ENCODE measurements at regions of chr11 and their contacts with region 1.

Region 1: GRCh38 chr11:18768472-18768901 is 23.1 kb downstream of the PTPN5 start:
- DNase-seq: no peak
- H3K4me3 ChIP-seq: no peak overlapping the region
- H3K4me3 Mint-ChIP-seq: no peak overlapping the region
- H3K27ac Mint-ChIP-seq: no peak overlapping the region
- H3K4me1 ChIP-seq: peaks cover 6% of the 10 kb centered on the region
- H3K4me1 Mint-ChIP-seq: no peaks in the 10 kb centered on the region
- H3K27me3 ChIP-seq: no peaks in the 10 kb centered on the region
- H3K27me3 Mint-ChIP-seq: peaks cover 4% of the 10 kb centered on the region
- CTCF ChIP-seq: no peak

Region 2: DNA sequence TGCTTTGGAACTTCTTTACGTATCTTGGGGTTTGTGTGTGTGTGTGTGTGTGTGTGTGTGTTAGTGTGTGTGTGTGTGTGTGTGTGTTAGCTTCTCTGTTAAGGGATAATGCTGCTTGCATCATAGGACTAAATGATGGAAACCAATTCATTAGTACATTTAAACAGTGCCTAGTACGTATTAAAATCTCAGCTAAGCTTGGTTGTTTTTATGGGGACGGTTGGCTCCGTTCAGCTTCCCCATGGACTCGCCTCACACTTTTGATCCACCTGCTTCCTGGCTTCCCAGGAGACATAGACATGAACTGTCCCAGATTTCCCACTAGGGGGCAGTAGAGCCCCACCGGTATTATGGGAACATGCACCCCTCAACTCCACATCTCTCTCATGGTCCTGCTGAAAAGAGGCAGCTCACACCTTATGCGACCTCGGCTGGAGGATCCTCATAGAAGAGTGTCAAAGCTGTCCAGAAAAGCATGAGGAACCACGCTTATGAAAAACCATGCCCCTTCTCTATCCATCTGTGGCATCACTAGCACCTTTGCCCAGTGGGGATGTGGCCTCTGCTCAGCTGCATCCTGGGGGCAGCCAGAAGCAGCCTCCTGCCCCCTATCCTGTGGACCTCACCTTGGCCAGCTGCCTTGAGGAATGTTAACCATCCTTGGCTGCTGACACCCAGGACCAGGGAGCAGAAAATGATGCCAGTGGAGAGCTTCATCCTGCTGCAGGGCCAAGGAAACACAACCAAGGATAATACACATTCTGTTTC is 652.9 kb before region 1 on chr11:
- CTCF ChIA-PET with region 1: interaction called, 6 read pairs
- POLR2A ChIA-PET with region 1: no interaction called
- intact Hi-C with region 1: loop called (anchors 1 kb)
- DNase-seq: peak; percentile 77 to 80
- H3K4me3 ChIP-seq: no peak overlapping the region
- H3K4me3 Mint-ChIP-seq: no peak overlapping the region
- H3K27ac Mint-ChIP-seq: no peak overlapping the region
- H3K4me1 ChIP-seq: no peaks in the 10 kb centered on the region
- H3K4me1 Mint-ChIP-seq: no peaks in the 10 kb centered on the region
- H3K27me3 ChIP-seq: no peaks in the 10 kb centered on the region
- H3K27me3 Mint-ChIP-seq: peaks cover 17% of the 10 kb centered on the region
- CTCF ChIP-seq: peak; percentile 88 to 93

Region 3: DNA sequence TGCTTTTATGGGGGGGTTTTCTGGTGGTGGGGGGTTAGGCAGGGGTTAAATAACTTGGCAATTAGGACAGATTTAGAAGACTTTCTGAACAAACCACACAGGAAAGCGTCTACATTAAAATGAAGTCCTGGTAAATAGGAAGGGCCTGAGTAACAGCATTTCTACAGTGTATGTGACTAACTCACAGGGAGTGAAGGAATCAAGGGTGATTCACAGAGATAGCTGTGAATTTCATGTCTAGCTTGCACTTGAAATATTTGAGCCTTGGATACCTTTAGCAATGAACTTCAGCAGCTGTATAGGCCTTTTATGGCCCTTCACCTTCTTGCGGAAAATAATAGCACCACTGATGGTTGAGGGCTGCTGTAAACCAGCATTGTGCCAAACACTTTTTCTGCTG is 400.3 kb before region 1 on chr11:
- CTCF ChIA-PET with region 1: no interaction called
- POLR2A ChIA-PET with region 1: no interaction called
- intact Hi-C with region 1: no loop called
- DNase-seq: no peak
- H3K4me3 ChIP-seq: no peak overlapping the region
- H3K4me3 Mint-ChIP-seq: no peak overlapping the region
- H3K27ac Mint-ChIP-seq: no peak overlapping the region
- H3K4me1 ChIP-seq: peaks cover 11% of the 10 kb centered on the region
- H3K4me1 Mint-ChIP-seq: no peaks in the 10 kb centered on the region
- H3K27me3 ChIP-seq: no peaks in the 10 kb centered on the region
- H3K27me3 Mint-ChIP-seq: no peaks in the 10 kb centered on the region
- CTCF ChIP-seq: no peak

Region 4: DNA sequence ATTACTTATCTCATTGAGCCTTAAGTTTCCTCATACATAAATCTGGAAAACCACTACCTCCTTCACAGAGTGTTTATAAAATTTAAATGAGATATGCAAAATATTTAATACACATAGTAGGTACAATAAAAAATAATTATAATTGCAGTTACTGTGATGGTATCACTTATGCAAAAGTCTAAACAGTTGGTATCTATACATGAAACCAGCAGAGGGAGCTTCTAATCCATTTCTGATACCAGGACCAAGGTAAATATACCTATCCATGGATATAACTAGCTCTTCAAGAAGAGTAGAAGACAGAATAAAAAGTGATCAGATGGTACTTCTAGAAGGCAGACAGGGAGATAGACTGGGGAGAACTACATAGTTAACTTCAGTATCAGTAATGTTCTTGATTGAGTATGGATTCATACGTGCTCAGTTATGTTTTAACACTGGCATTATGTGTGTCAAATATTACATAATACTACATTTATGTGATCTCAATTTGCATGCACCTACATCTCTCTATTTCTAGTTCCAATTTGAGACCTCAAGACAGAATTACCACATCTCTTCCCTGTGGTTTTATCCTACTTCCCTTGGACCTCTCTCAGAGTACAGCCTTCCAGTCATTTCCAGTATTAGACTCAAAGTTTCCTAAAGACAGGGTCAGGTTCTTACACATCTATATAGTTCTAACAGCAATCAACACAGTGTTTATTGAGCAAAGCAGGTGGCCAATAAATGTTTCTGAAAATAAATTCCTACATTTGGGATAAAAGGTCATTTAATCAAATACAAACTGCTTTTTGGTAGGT is 228.1 kb before region 1 on chr11:
- CTCF ChIA-PET with region 1: interaction called, 13 read pairs
- POLR2A ChIA-PET with region 1: no interaction called
- intact Hi-C with region 1: loop called (anchors 1 kb)
- DNase-seq: peak in 1 of 2 experiments; percentile 37
- H3K4me3 ChIP-seq: no peak overlapping the region
- H3K4me3 Mint-ChIP-seq: no peak overlapping the region
- H3K27ac Mint-ChIP-seq: no peak overlapping the region
- H3K4me1 ChIP-seq: 0 out of 2 replicates have a peak, but pooled peaks cover 6% of the 10 kb centered on the region
- H3K4me1 Mint-ChIP-seq: no peaks in the 10 kb centered on the region
- H3K27me3 ChIP-seq: no peaks in the 10 kb centered on the region
- H3K27me3 Mint-ChIP-seq: no peaks in the 10 kb centered on the region
- CTCF ChIP-seq: peak; percentile 58 to 65

Region 5: DNA sequence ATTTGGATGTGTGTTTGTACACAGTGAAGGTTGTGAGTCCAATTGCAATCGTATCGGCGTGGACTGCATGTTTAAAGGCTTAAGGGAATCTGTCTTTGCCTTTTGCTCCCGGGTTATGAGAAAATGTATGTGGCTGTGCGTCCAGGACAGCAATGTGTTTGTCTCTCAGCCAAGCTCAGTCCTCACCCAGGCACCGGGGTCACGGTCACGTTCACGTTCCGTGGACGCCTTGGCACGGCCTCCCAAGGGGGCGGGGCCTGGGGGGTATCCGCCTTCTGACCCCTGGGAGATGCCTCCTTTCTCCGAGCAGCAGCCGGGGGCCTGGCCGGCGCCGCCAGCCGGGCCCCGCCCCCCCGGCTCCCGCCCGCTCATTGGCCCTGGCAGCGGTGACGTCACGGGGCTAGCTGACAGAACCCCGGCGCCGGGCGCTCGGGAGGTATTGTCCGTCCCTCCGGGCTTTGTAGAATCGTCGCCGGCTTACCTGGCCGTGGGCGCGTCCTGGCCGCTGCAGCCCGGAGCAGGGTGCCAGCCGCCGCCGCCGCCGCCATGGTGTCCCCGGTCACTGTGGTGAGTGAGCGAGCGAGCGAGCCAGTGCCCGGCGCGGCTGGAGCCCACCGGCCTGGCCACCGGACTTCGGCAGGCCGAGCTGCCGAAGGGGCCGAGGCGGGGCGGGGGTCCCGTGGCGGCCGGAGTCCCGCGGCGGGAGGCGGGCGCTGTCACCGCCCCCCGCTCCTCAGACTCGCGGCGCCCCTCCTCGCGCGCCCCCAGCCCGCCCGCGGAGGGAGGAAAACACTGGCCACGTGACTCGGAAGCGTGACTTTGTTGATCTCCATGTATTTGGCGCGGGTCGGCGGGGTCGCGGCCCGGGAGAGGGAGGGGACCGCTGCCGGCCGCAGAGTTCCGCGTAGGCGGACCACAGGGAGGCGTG is 69.9 kb before region 1 on chr11 and contains the start of gene TMEM86A:
- CTCF ChIA-PET with region 1: no interaction called
- POLR2A ChIA-PET with region 1: no interaction called
- intact Hi-C with region 1: loop called (anchors 2 kb)
- DNase-seq: peak; percentile 88 to 94
- H3K4me3 ChIP-seq: peak within 1 kb of the TSS; percentile 60
- H3K4me3 Mint-ChIP-seq: peak within 1 kb of the TSS; percentile 68
- H3K27ac Mint-ChIP-seq: no peak within 1 kb of the TSS
- H3K4me1 ChIP-seq: peaks cover 4% of the 10 kb centered on the region
- H3K4me1 Mint-ChIP-seq: peaks cover 5% of the 10 kb centered on the region
- H3K27me3 ChIP-seq: peaks cover 1% of the 10 kb centered on the region
- H3K27me3 Mint-ChIP-seq: peaks cover 23% of the 10 kb centered on the region
- CTCF ChIP-seq: peak in 1 of 2 experiments; percentile 15
- total RNA-seq, gene TMEM86A: 0.19 and 0.25 TPM in 2 replicates

Region 6: GRCh38 chr11:18731949-18732821 is 36.3 kb before region 1 on chr11:
- CTCF ChIA-PET with region 1: interaction called, 5 read pairs
- POLR2A ChIA-PET with region 1: no interaction called
- intact Hi-C with region 1: loop called (anchors 2 kb)
- DNase-seq: peak; percentile 60 to 74
- H3K4me3 ChIP-seq: no peak overlapping the region
- H3K4me3 Mint-ChIP-seq: no peak overlapping the region
- H3K27ac Mint-ChIP-seq: no peak overlapping the region
- H3K4me1 ChIP-seq: 0 out of 2 replicates have a peak, but pooled peaks cover 17% of the 10 kb centered on the region
- H3K4me1 Mint-ChIP-seq: peaks cover 23% of the 10 kb centered on the region
- H3K27me3 ChIP-seq: no peaks in the 10 kb centered on the region
- H3K27me3 Mint-ChIP-seq: peaks cover 10% of the 10 kb centered on the region
- CTCF ChIP-seq: peak; percentile 91 to 98

Region 7: DNA sequence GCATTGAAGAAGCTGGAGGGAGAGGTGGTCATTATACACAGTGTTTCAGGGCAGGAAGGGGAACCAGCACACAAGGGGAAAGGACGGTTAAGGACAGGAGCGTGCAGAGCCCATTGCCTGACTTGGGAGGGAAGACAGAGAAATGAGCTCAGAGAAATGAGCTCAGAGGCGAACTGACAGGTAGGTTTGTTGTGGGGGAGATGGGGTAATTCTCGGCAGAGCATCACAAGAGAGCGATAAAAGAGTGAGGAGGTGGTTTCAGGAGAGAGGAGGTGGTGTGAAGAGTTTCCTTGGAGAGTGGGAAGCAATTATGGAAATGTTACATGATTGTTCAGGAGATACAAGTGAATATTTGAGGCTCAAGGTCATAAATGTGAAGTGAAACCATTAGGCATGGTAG is 109.7 kb after region 1 on chr11:
- CTCF ChIA-PET with region 1: no interaction called
- POLR2A ChIA-PET with region 1: no interaction called
- intact Hi-C with region 1: no loop called
- DNase-seq: no peak
- H3K4me3 ChIP-seq: no peak overlapping the region
- H3K4me3 Mint-ChIP-seq: no peak overlapping the region
- H3K27ac Mint-ChIP-seq: no peak overlapping the region
- H3K4me1 ChIP-seq: no peaks in the 10 kb centered on the region
- H3K4me1 Mint-ChIP-seq: no peaks in the 10 kb centered on the region
- H3K27me3 ChIP-seq: no peaks in the 10 kb centered on the region
- H3K27me3 Mint-ChIP-seq: peaks cover 7% of the 10 kb centered on the region
- CTCF ChIP-seq: no peak